ENCODE measurements at regions of chr15 and their contacts with region 1.

Region 1: GRCh38 chr15:39580117-39580484 is 778 bp upstream of the THBS1 start:
- DNase-seq: peak; percentile 97
- ATAC-seq: peak; percentile 94

Region 2: GRCh38 chr15:38817427-38818156 is 762.5 kb before region 1 on chr15:
- intact Hi-C with region 1: loop called (anchors 10 kb)
- DNase-seq: peak; percentile 89
- ATAC-seq: peak; percentile 97

Region 3: DNA sequence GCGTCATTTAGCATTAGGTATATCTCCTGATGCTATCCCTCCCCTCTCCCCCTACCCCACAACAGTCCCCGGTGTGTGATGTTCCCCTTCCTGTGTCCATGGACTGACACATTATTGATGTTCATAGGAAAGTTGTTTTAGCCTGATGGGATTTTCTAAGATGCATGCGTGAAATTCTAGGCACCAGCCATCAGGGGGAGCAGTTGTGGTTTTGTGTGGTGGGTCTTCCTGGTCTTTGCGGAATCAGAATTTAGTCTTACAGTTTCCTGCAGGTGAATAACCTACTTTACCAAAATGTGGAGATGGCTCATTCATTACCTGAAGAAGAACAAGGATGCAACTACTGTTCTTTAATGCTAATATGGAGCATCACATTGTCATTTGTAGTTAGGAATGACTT is 454.2 kb before region 1 on chr15:
- intact Hi-C with region 1: loop called (anchors 5 kb)
- DNase-seq: no peak
- ATAC-seq: no peak

Region 4: DNA sequence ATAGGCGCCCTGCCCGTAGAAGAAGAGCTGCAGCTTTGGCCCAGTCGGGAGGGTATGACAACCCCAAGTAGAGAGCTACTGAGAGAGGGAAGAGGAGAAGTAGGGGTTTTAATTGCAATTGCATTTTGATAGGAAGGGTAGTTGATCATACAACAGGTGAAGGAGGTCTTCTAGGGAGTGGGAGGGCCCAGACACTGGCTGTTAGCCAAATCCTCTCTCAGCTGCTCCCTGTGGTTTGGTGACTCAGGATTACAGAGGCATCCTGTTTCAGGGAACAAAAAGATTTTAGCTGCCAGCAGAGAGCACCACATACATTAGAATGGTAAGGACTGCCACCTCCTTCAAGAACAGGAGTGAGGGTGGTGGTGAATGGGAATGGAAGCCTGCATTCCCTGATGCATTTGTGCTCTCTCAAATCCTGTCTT is 408.1 kb before region 1 on chr15:
- intact Hi-C with region 1: loop called (anchors 2 kb)
- DNase-seq: no peak
- ATAC-seq: peak; percentile 91

Region 5: DNA sequence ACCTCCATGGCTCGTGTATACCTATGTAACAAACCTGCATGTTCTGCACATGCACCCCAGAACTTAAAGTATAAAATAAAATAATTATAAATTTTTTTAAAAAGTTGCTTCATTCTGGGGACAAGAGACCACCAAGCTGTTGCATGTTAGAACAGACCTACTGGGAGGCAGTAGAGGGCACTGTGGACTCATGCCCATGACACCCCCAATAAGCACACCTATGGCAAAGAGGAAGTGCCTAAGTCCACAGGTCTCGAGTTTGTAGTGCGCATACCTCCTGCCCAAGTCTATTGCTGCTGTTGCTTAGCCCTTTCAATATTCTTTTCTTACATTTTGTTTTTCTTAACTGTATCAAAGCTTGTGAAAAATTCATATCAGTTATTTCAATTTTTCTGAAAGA is 267.1 kb before region 1 on chr15:
- intact Hi-C with region 1: loop called (anchors 10 kb)
- DNase-seq: no peak
- ATAC-seq: peak; percentile 74

Region 6: DNA sequence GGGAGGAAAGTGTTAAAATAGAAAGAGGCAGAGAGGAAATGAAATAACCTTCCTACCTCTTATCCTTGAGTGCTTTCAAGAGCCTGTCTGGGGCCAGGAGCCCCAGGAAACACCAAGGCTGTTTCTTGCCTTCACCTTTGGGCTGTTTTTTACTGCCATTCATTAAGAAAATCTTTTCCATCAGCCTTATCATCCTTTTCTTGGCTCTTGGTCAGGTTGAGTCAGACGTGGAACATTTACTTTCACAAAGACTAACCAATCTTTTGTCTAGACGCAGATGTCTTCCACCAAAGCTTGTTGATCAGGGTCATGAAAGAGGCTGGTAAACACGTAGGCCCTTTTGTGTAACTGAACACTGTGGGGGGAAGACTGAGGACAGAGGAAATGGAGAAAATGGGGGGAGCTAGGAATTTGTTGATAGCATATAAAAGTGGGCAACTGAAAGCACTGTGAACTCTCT is 150.2 kb before region 1 on chr15:
- intact Hi-C with region 1: loop called (anchors 2 kb)
- DNase-seq: no peak
- ATAC-seq: no peak

Region 7: DNA sequence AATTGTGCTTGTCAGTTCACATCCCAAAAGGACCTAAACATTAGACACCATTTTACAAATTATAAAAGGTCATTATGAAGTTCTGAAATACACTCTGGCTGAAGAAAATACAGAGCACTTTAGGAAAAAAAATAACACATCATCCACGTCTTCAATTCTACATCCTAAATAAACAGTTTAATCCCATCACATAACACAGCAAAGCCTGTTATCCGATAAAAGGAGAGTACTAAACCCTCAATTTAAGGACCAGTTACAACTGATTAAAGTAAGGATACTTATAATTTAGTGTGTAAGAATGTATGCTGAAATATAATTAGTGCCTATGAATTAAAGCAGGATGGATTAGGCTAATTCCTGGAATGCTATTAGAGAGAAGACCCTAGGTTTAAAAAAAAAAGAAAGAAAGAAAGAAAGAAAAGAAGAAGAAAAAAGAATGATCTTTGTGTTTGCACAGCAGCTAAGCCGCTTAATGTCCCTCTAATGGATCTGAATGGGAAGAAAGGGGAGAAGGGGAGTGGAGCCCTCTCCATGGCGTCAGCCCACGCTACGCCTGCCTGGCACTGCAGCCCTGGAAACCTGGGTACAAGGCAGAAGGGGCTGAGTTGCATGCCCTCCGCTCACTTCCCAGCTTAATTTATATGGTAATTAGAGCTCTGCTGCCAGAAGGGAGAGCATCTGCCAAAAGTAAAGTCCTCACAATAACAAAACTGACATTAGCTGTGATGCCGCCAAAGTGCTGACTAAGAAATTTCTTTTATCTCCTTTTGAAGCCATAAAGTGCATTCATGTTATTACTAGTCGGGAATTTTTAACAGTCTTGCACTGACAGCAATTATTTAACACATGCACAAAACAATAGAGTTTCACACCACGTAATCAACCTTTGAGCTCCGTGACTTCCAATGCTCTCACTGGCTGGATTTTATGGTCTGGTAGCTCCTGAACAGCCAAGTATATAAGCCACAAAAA is 112.5 kb after region 1 on chr15:
- intact Hi-C with region 1: no loop called
- DNase-seq: no peak
- ATAC-seq: no peak

Region 8: DNA sequence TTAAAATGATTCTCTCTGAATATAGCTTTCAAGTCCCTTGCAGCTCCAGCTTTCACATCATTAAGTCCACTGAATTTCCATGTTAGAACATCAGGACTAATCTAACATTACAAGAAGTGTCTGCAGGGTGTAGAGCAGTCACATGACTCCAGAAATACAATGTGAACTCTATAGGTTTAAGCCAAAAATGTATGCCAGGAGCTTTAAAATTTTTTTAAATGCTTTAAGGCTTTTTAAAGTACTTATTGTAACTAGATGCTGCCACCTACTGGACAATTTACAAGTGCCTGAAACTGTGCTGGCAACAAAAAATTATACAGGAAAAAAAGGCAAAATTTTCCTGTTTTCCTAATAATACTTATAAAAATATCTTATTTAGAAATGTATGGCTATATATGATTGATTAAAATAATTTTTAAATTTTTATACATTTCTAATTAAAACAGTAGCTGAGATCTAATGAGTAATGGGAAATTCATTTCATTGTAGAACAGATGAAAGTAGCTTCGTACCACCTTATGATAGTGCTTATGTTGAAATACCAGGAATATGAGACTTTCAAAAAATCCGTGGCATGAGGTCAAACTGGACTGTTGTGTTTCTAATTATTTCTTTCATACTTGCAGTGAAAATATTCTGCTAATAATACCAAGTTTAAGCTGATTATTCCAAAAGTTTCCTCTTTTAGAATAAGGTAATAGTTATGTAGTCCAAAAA is 176.9 kb after region 1 on chr15:
- intact Hi-C with region 1: loop called (anchors 10 kb)
- DNase-seq: no peak
- ATAC-seq: no peak